CD4-positive, alpha-beta T cell (primary cell): ENCODE measurements at regions of chr2 and their contacts with region 1.

Region 1: GRCh38 chr2:236569573-236569973 is at the start of gene ACKR3:
- DNase-seq: peak; percentile 44 to 92 (median 65)
- ATAC-seq: peak; percentile 98
- H3K4me3 ChIP-seq: peak within 1 kb of the TSS; percentile 50
- H3K4me3 Mint-ChIP-seq: peak within 1 kb of the TSS; percentile 68
- H3K27ac ChIP-seq: no peak within 1 kb of the TSS
- H3K27ac Mint-ChIP-seq: peak within 1 kb of the TSS; percentile 33
- H3K4me1 ChIP-seq: peaks cover 23% of the 10 kb centered on the region
- H3K4me1 Mint-ChIP-seq: peaks cover 20% of the 10 kb centered on the region
- H3K27me3 ChIP-seq: no peaks in the 10 kb centered on the region
- H3K27me3 Mint-ChIP-seq: no peaks in the 10 kb centered on the region
- CTCF ChIP-seq: peak; percentile 68
- total RNA-seq, gene ACKR3: 0.61 to 0.74 TPM

Region 2: GRCh38 chr2:236343400-236344161 is 226.0 kb before region 1 on chr2:
- CTCF ChIA-PET with region 1: interaction called, 5 read pairs
- POLR2A ChIA-PET with region 1: no interaction called
- intact Hi-C with region 1: loop called in 1 of 2 experiments (anchors 2 kb)
- DNase-seq: peak in 13 of 14 experiments; percentile 15 to 73 (median 37)
- ATAC-seq: peak; percentile 51
- H3K4me3 ChIP-seq: no peak overlapping the region
- H3K4me3 Mint-ChIP-seq: no peak overlapping the region
- H3K27ac ChIP-seq: no peak overlapping the region
- H3K27ac Mint-ChIP-seq: no peak overlapping the region
- H3K4me1 ChIP-seq: no peaks in the 10 kb centered on the region
- H3K4me1 Mint-ChIP-seq: no peaks in the 10 kb centered on the region
- H3K27me3 ChIP-seq: no peaks in the 10 kb centered on the region
- H3K27me3 Mint-ChIP-seq: peaks cover 3% of the 10 kb centered on the region
- CTCF ChIP-seq: peak; percentile 91

Region 3: GRCh38 chr2:236512902-236513435 is 56.6 kb before region 1 on chr2:
- CTCF ChIA-PET with region 1: interaction called, 73 read pairs
- POLR2A ChIA-PET with region 1: interaction called, 26 read pairs
- intact Hi-C with region 1: loop called (anchors 1 kb)
- DNase-seq: peak; percentile 52 to 82 (median 65)
- ATAC-seq: peak; percentile 93
- H3K4me3 ChIP-seq: no peak overlapping the region
- H3K4me3 Mint-ChIP-seq: no peak overlapping the region
- H3K27ac ChIP-seq: no peak overlapping the region
- H3K27ac Mint-ChIP-seq: no peak overlapping the region
- H3K4me1 ChIP-seq: peaks cover 7% of the 10 kb centered on the region
- H3K4me1 Mint-ChIP-seq: no peaks in the 10 kb centered on the region
- H3K27me3 ChIP-seq: no peaks in the 10 kb centered on the region
- H3K27me3 Mint-ChIP-seq: no peaks in the 10 kb centered on the region
- CTCF ChIP-seq: peak; percentile 89

Region 4: DNA sequence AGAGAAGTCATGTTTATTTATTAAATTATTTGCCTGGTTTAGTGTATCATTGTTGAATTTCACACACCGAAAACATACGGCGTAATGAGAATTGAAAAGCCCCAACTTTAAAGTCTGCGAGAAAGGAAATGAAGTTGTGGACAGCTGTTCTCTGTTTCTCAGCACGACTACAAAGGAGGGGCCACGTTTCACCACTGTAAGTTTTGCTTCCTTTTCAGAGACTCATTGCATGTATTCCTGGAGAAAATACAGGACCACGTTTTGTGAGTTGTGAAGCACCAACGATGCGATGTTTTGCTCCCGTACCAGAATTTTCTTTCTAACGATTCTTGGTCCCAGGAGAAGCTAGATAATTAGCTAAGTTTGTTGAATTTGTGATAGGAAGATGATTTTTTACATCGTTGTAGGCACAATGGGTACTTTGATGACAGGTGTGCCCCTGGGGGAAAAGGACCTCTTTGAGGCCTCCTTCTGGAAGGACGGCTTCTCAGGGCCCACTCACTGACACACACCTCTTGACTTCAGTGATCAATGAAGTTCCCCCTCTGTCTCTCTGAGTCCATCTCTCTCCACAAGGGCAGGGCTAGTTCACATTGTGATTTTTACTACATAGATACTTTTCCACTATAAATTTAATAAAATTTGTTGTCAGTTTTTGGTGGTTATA is 23.6 kb before region 1 on chr2:
- CTCF ChIA-PET with region 1: no interaction called
- POLR2A ChIA-PET with region 1: interaction called, 13 read pairs
- intact Hi-C with region 1: loop called in 1 of 2 experiments (anchors 2 kb)
- DNase-seq: peak in 5 of 14 experiments; percentile 30 to 73 (median 63)
- ATAC-seq: peak; percentile 52
- H3K4me3 ChIP-seq: peak overlapping the region; percentile 17
- H3K4me3 Mint-ChIP-seq: peak overlapping the region; percentile 62
- H3K27ac ChIP-seq: peak overlapping the region; percentile 59 to 85
- H3K27ac Mint-ChIP-seq: peak overlapping the region; percentile 89
- H3K4me1 ChIP-seq: peaks cover 73% of the 10 kb centered on the region
- H3K4me1 Mint-ChIP-seq: peaks cover 94% of the 10 kb centered on the region
- H3K27me3 ChIP-seq: no peaks in the 10 kb centered on the region
- H3K27me3 Mint-ChIP-seq: no peaks in the 10 kb centered on the region
- CTCF ChIP-seq: no peak

Region 5: DNA sequence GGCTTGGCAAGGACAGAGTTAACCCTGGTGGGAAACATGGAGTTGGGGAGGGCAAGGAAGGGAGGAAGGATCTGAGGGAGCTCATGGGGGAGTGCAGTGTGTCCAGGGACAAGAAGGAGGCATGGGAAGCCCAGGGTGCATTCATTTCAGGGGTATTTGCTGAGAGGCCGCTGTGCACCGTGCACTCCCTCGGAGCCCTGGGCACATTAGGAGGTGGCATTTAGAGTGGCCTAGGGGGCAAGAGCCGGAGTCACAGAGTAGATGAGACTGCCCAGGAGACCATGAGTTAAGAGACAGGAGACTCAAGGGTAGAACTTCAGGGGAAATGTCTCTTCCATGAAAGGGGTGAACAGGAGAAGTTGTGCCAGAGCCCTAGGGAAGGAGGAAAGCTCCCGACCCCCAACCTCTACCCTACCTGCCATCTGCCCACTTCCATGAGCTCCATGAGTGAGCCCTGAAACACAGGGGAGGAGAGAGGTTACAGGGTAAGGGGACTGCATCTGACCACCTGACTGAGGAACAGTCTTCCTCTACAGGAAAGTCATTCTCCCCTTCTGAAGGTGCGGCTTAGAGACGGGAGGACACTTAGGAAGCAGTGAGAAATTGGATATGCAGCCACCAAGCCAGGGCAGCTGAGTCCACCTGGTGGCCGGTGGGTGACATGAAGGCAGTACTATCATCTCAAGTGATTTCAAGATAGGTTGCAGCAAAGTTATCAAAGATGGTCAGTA is 457.6 kb after region 1 on chr2:
- CTCF ChIA-PET with region 1: no interaction called
- POLR2A ChIA-PET with region 1: no interaction called
- intact Hi-C with region 1: loop called in 1 of 2 experiments (anchors 5 kb)
- DNase-seq: peak; percentile 11 to 64 (median 36)
- ATAC-seq: peak; percentile 61
- H3K4me3 ChIP-seq: no peak overlapping the region
- H3K4me3 Mint-ChIP-seq: no peak overlapping the region
- H3K27ac ChIP-seq: no peak overlapping the region
- H3K27ac Mint-ChIP-seq: no peak overlapping the region
- H3K4me1 ChIP-seq: no peaks in the 10 kb centered on the region
- H3K4me1 Mint-ChIP-seq: no peaks in the 10 kb centered on the region
- H3K27me3 ChIP-seq: no peaks in the 10 kb centered on the region
- H3K27me3 Mint-ChIP-seq: no peaks in the 10 kb centered on the region
- CTCF ChIP-seq: peak; percentile 61